ENCODE measurements at regions of chr4 and their contacts with region 1.

Region 1: DNA sequence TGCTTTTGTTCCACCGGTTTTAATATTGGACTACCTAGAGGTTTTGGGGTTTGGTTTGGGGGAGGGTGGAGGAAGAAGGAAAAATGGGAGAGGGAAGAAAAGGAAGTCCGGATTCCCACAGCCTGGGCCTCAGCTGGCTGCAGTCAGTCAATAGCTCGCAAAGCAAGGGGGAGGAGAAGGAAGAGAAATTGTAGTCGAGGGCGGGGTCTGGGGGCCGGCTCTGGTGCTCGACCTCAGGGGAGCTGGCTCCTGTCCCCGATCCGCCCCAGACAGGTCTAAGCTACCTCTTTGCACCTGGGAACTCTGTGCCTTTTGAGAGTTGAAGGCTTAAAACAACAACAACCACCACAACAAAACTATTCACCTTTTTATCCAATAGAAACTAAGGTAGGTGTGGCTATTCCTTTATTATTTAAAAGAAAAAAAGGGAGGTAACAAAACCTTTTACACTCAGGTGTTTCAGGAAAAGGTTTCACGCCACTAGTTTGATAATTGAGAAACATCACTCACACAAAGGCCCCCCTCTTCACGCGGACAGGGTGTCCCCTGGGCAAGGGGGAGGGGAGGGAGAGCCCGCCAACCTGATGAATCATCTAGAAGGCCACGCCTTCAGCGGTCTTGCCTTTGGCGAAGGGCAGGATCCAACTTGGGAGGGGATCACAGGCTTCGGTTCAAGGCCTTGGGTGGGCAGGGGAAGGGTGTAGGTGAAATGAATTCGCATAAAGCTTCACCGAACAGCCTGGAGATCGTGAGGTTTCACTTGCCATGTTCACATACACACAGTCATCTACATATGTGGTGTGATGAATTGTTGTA is 1.6 kb upstream of the LNX1 start:
- DNase-seq: peak; percentile 73
- H3K4me3 ChIP-seq: peak overlapping the region; percentile 17 to 27 (median 27)
- H3K27ac ChIP-seq: peak overlapping the region; percentile 71
- H3K4me1 ChIP-seq: peaks cover 41% of the 10 kb centered on the region
- H3K27me3 ChIP-seq: no peaks in the 10 kb centered on the region
- CTCF ChIP-seq: no peak

Region 2: DNA sequence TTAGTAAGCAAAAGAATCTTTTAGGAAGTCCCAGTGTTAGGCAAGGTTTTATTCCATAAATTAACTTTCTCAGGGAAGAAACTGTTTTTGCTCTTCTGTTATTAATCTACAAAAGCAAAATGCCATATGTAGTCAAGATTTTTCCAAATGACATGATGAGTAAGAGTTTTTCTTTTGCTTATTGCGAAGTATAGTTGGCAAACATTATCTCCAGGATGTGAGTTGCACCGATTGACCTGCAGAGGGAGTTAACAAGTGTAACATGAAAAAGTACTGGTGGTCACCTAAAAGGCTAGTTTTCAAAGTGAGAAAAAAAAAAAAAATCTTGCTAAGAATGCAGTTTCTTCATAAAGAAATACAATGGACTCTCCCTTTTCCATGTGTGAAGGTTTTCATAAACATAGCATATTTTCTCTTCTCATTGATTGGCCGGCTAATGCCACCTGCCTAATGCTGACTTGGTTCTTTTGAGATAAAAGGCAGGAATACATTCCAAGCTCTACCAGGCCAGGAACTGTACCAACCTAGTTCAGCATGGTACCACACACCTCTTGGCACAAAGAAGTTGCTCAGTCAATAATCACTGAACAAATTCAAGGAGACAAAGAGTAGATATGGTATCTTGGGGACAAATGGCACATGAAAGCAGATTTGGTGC is 101.8 kb before region 1 on chr4:
- CTCF ChIA-PET with region 1: no interaction called
- dilution Hi-C with region 1: no loop called
- in situ Hi-C with region 1: loop called in 1 of 2 experiments (anchors 25 kb)
- intact Hi-C with region 1: no loop called
- DNase-seq: peak; percentile 69
- H3K4me3 ChIP-seq: no peak overlapping the region
- H3K27ac ChIP-seq: no peak overlapping the region
- H3K4me1 ChIP-seq: peaks cover 4% of the 10 kb centered on the region
- H3K27me3 ChIP-seq: no peaks in the 10 kb centered on the region
- CTCF ChIP-seq: peak; percentile 70 to 84

Region 3: DNA sequence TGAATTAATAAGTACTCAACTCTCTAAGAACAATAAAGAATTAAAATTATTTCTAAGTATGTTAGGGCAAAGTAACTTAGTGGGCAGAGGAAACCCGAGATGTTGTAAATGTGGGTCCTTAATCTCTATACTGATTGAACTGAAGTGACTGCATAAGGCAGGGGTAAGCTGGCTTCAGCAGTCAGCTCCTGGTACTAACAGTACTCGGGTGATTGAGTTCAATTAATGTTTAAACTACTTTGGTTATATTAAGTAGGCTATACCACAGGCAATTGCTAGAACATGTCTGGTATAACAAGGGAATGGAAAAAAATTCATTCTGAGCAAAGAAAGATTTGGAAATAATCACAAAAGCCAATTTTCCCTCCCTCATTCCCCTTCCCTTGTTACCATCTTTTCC is 92.3 kb before region 1 on chr4:
- CTCF ChIA-PET with region 1: no interaction called
- dilution Hi-C with region 1: loop called (anchors 5 kb)
- in situ Hi-C with region 1: loop called in 1 of 2 experiments (anchors 25 kb)
- intact Hi-C with region 1: no loop called
- DNase-seq: no peak
- H3K4me3 ChIP-seq: no peak overlapping the region
- H3K27ac ChIP-seq: no peak overlapping the region
- H3K4me1 ChIP-seq: no peaks in the 10 kb centered on the region
- H3K27me3 ChIP-seq: no peaks in the 10 kb centered on the region
- CTCF ChIP-seq: no peak

Region 4: GRCh38 chr4:53541577-53542206 is 51.2 kb before region 1 on chr4:
- CTCF ChIA-PET with region 1: no interaction called
- dilution Hi-C with region 1: loop called (anchors 5 kb)
- in situ Hi-C with region 1: no loop called
- intact Hi-C with region 1: no loop called
- DNase-seq: peak; percentile 75
- H3K4me3 ChIP-seq: no peak overlapping the region
- H3K27ac ChIP-seq: peak overlapping the region; percentile 48
- H3K4me1 ChIP-seq: peaks cover 28% of the 10 kb centered on the region
- H3K27me3 ChIP-seq: no peaks in the 10 kb centered on the region
- CTCF ChIP-seq: no peak

Measured in mammary epithelial cell (primary cell).